HEK293T (cell line): ENCODE measurements at regions of chr16 and their contacts with region 1.

Region 1: GRCh38 chr16:66928702-66929388 is 3.5 kb upstream of the RRAD start:
- DNase-seq: no peak

Region 2: DNA sequence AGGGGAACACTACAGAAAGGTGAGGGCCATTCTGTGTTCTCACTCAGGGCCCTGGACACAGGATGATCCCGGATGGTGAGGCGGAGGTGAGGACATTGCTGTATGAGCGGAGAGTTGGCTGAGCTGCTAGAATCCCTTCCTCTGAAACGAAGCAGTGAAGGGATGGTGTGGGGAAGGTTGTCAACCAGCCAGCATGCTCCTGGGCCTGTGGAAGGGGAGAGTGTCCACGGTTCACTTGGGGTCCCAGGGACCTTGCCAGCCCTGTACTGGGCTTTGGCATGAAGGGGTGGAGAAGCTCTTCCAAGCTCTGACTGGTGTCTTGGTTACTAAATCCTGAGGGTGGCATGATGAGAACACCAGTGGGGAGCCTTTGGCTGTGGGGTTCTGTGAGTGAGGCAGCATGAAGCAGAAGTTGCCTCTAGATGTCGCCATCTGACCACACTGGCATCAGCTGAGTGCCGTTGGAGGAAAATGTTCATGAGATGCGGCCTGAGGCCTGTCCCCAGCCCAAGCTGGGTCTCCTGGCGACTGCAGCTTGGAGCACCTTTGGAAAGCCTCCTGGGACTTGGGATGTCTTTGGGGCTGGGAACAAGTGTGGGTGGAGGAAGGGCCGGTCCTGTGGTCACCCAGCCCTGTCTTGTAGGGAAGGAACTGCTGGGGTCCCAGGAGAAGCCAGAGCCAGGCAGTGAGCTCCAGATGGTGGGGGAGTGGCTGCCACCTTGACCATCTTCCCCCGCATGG is 33.7 kb before region 1 on chr16:
- CTCF ChIA-PET with region 1: interaction called, 27 read pairs
- POLR2A ChIA-PET with region 1: interaction called, 6 read pairs
- DNase-seq: peak; percentile 75